ENCODE measurements at regions of chr11 and their contacts with region 1.

Region 1: DNA sequence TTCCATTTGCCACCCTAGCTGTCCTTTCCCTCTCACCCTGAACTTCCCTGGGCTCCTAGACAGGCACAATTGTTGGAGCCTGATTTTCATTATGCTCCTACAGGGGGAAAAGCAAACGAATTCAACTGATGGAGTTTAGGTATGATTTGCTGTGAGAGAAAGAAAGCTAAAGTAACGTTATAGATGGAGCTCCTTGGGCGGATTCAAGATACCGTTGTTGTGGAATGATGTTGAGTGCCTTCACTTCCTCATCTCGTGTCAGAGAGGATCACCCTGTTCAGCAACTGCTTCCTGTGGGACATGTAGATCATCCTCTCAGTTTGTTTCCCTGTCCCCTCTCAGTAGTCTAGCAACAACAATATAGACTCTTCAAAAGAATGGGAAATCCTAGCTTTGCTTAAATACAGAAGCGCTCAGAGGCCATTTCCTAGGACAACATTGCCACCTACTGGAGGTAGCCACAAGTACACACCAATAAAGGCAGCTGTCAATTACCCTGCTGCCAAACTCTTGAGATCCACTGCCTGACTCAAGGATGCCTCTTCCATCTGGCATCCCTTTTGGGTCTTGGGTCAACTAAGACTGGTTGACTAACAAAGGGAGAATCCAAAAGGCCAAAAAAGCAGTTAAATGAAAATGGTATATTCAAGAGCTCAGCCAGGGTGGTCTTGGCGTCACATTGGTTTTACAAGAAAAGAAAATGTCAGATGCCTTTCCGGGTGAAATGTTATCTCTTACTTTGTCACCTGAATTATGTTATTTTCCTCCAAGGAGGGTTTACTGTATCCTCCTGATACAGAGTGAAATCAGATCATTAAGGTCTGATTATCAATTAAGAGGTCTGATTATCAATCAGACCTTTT is 13.5 kb upstream of the DTX4 start:
- DNase-seq: no peak
- ATAC-seq: peak; percentile 94
- H3K4me3 Mint-ChIP-seq: peak overlapping the region; percentile 25
- H3K27ac Mint-ChIP-seq: no peak overlapping the region
- H3K4me1 Mint-ChIP-seq: peaks cover 9% of the 10 kb centered on the region
- H3K27me3 Mint-ChIP-seq: peaks cover 12% of the 10 kb centered on the region

Region 2: DNA sequence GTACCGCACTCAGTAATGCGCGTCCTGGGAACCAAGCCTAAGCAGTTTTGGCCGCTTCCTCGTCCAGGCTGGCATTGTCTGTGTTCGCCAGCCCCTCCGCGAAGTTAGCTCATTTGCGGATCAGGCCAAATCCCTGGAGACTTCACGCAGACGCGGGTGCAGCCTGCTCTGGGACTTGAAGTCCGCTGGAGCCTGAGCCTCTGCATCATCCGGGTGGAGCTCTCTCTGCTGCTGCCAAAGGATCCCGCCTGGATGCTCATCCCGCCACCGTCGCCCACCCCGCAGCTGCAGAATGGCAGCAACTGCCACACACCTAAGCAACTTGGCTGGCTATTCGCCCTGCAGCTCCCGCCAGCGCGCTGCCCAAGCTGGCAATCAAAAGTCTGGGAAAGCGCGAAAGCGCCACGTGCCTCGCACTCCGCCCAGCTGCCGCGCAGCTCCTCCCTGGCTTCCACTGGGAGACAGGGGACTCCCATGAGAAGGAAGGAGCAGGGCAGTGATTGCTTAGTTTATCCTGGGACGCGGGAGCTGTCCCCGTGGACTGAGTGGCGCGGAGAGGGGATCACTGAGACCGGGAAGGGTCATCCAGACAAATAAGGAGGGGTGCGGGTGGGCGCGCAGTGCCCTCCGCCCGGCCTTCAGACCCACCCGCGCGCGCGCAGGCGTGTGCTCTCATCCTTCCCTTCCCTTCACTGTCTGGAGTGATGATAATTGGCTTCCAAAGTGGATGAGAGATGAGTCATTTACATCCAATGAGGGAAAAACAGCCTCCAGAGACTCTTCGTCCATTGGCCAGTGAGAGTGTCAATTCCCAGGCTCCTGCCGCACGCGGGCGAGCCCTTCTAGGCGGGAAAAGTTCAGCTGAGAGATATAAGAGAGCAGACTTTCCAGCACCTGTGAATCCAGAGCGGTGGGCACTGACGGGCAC is 95.6 kb before region 1 on chr11:
- POLR2A ChIA-PET with region 1: no interaction called
- DNase-seq: no peak
- ATAC-seq: no peak
- H3K4me3 Mint-ChIP-seq: no peak overlapping the region
- H3K27ac Mint-ChIP-seq: no peak overlapping the region
- H3K4me1 Mint-ChIP-seq: peaks cover 2% of the 10 kb centered on the region
- H3K27me3 Mint-ChIP-seq: peaks cover 47% of the 10 kb centered on the region

Region 3: GRCh38 chr11:59142530-59143507 is 15.6 kb before region 1 on chr11 and contains the start of gene FAM111A:
- POLR2A ChIA-PET with region 1: interaction called, 28 read pairs
- DNase-seq: peak; percentile 86
- ATAC-seq: peak; percentile 89
- H3K4me3 Mint-ChIP-seq: peak within 1 kb of the TSS; percentile 92
- H3K27ac Mint-ChIP-seq: peak within 1 kb of the TSS; percentile 93
- H3K4me1 Mint-ChIP-seq: peaks cover 34% of the 10 kb centered on the region
- H3K27me3 Mint-ChIP-seq: no peaks in the 10 kb centered on the region
- total RNA-seq, gene FAM111A: 147 to 153 TPM

Region 4: GRCh38 chr11:59207988-59208451 is 49.6 kb after region 1 on chr11:
- POLR2A ChIA-PET with region 1: no interaction called
- DNase-seq: no peak
- ATAC-seq: peak; percentile 54
- H3K4me3 Mint-ChIP-seq: no peak overlapping the region
- H3K27ac Mint-ChIP-seq: no peak overlapping the region
- H3K4me1 Mint-ChIP-seq: peaks cover 7% of the 10 kb centered on the region
- H3K27me3 Mint-ChIP-seq: peaks cover 12% of the 10 kb centered on the region

Measured in activated naive CD8-positive, alpha-beta T cell treated with anti-CD3 and anti-CD28 coated beads, Interleukin-2, amount 10 ng/mL, durations not matched to agents 7 days and 5 days (primary cell).